ENCODE measurements at regions of chr9 and their contacts with region 1.

Region 1: DNA sequence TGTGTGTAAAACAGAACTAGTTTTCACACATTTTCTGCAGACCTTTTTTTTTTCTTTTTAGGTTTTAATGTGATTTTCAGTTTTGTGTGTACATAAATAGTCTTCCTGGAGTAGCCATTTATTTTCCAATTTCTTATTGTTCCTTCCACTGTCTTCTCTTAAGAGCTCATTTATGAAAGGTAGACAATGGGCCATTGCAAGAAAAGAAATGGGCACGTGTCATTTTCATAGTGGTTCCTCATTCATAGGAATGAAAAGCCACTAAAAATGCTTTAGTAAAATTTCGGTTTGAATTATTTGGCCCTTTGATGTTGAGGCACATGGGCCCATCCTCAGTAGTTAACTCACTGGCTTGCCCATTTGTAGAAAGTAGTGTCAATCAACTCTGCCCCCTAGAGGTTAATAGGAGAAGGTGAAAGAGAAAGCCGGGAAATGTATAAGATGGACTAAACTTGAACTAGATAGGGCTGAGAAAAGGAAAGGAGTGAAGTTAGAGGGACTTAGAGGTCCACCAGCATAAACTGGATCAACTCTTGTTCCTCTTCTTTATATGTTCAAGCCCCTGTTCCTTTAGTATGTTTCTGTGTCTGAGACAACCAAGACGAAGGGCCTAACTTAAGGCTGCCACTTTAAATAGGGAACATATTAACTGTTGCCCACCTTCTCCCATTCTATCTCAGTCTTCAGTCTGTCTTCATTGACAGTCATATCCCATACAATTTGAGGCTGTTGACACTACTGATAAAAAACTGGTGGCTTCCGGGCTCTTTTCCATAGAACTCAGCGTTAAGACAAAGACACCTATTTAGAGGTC is 72.6 kb downstream of the SMARCA2 start:
- DNase-seq: no peak
- H3K4me3 ChIP-seq: no peak overlapping the region
- H3K27ac ChIP-seq: no peak overlapping the region
- H3K4me1 ChIP-seq: no peaks in the 10 kb centered on the region
- H3K27me3 ChIP-seq: no peaks in the 10 kb centered on the region
- CTCF ChIP-seq: peak in 2 of 3 experiments; percentile 57 to 71; a peak in 3 of 4 replicates
- EP300 ChIP-seq: no peak
- POLR2A ChIP-seq: no peak
- RAD21 ChIP-seq: peak; percentile 71 to 80

Region 2: DNA sequence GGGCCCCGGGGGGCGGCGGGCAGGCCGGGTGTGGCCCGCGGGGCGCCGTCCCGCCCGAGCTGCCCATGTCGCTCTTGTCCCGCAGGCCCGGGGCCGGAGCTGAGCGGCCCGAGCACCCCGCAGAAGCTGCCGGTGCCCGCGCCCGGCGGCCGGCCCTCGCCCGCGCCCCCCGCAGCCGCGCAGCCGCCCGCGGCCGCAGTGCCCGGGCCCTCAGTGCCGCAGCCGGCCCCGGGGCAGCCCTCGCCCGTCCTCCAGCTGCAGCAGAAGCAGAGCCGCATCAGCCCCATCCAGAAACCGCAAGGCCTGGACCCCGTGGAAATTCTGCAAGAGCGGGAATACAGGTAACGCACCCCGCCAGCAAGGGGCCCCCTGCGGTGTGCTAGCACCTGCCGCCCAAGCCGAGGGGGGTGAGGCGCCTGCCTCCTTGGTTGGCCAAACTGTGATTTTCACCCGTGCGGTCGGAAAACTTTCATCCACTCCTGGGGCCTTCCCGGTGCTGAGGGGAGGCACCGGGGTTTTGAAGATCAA is 40.5 kb before region 1 on chr9:
- CTCF ChIA-PET with region 1: no interaction called
- POLR2A ChIA-PET with region 1: no interaction called
- DNase-seq: peak in 1 of 2 experiments; percentile 60
- H3K4me3 ChIP-seq: peak overlapping the region; percentile 22 to 51 (median 27); a peak in 5 of 8 replicates
- H3K27ac ChIP-seq: no peak overlapping the region
- H3K4me1 ChIP-seq: peaks cover 0 to 4% (median 0%) of the 10 kb centered on the region in 4 experiments; a peak in 1 of 7 replicates
- H3K27me3 ChIP-seq: peaks cover 0 to 15% (median 8%) of the 10 kb centered on the region in 4 experiments; a peak in 6 of 7 replicates
- CTCF ChIP-seq: no peak
- EP300 ChIP-seq: no peak
- POLR2A ChIP-seq: no peak
- RAD21 ChIP-seq: no peak

Region 3: DNA sequence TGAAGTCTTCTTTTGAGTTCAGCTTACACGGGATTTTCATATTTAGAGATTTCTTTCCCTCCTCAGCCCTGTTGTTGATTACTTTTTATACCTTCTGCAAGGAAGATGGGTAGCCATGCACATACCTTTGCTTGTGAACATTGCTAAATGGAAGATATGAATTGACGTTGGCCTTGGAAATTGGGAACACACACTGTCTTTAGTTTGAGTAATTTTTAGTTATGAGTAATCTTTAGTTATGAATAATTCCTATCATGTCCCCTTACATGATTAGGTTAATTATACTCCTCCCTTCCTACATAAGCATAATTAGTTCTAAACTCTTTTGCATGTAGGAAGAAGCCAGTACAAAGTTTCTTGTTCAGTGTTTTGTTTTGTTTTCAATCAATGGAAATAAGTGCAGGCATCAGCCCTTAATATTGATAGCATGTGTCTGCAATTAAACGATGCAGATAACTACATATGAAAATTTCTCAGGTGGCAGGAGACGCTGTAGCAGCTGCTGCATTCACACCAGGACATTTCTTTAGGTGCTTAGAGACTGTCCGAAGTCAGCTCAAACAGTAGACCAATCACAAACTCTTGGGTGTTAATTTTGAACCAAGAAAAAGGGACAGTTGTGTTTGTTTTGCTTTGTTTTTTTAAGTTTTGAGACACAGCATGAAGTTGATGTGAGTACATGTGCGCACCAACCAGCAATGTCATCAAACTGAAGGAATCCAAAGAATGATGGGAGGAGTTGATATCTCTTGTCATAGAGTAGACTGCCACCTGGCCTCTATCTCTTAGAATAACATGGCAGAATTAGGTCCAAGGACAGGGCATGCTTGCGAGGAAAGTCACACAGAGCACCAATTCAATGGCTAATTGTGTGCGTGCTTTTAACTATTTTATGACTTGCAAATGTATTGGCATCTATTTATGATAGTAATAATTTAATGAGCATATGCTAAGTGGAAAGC is 21.1 kb before region 1 on chr9:
- CTCF ChIA-PET with region 1: interaction called, 10 read pairs
- POLR2A ChIA-PET with region 1: no interaction called
- DNase-seq: no peak
- H3K4me3 ChIP-seq: no peak overlapping the region
- H3K27ac ChIP-seq: no peak overlapping the region
- H3K4me1 ChIP-seq: no peaks in the 10 kb centered on the region
- H3K27me3 ChIP-seq: no peaks in the 10 kb centered on the region
- CTCF ChIP-seq: peak in 2 of 3 experiments; percentile 48 to 54; a peak in 3 of 4 replicates
- EP300 ChIP-seq: no peak
- POLR2A ChIP-seq: no peak
- RAD21 ChIP-seq: peak; percentile 77 to 83

Region 4: DNA sequence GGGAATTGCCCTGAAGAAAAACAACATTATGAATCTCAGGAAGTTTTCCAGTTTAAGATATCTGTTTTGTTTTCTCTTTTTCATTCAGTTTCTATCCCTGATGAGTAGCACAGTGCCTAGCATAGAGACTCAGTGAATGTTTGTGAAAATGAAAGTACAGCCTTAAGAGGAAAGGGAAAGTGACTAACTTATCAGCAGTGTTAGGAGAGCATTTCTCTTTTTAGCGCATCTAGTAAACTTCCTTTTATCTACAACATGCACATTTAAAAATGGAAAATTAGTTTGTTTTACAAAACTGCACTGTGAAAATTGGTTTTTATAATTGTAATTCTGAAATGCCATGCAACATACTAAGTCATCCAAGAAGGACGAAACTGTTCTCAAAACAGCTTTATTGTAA is 38.2 kb after region 1 on chr9:
- CTCF ChIA-PET with region 1: interaction called, 10 read pairs
- POLR2A ChIA-PET with region 1: no interaction called
- DNase-seq: no peak
- H3K4me3 ChIP-seq: no peak overlapping the region
- H3K27ac ChIP-seq: no peak overlapping the region
- H3K4me1 ChIP-seq: no peaks in the 10 kb centered on the region
- H3K27me3 ChIP-seq: no peaks in the 10 kb centered on the region
- CTCF ChIP-seq: no peak
- EP300 ChIP-seq: no peak
- POLR2A ChIP-seq: no peak
- RAD21 ChIP-seq: no peak